Activated CD4-positive, alpha-beta T cell treated with anti-CD3 and anti-CD28 coated beads, Interleukin-2, amount 10 ng/mL, durations not matched to agents 24 days and 14 days (primary cell): ENCODE measurements at regions of chr14 and their contacts with region 1.

Region 1: GRCh38 chr14:58297762-58298476 is 436 bp upstream of the ARID4A start:
- DNase-seq: peak; percentile 99
- H3K4me3 Mint-ChIP-seq: no peak overlapping the region
- H3K27ac Mint-ChIP-seq: no peak overlapping the region
- H3K4me1 Mint-ChIP-seq: peaks cover 20% of the 10 kb centered on the region
- H3K27me3 Mint-ChIP-seq: no peaks in the 10 kb centered on the region

Region 2: DNA sequence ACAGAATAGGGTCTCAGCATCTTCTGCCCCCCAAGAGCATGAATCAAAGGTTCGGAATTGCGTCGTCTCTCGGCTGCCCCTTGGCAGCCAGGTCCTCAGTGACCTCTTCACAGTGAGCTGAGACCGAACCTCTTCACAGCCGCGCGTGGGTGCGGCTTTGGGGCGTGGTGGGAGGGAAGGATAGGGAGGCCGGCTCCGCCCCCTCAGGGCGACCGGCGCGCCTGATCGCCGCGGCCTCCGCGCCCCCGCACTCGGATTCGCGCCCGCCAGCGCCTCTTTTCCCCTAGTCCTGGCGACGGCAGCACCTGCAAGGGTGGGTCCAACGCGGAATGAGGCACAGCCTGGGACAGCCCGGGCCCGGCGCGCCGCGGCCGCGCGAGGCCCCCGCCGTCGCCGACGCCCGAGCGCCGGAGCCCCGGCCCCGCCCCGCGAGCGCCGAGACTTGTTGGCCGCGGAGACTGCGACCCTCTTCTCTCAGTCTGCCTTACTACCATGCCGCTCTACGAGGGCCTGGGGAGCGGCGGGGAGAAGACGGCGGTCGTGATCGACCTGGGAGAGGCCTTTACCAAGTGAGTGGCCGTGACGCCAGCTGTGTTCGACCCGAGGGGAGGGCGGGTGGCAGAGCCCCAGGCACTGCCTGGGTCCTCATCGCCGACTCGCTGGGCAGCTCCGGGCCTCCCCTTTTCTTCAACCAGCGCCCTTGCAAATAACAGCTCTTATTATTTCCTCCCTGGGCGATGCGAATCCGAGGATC is 98.0 kb before region 1 on chr14 and contains the start of gene ACTR10:
- intact Hi-C with region 1: loop called (anchors 1 kb)
- DNase-seq: peak; percentile 96
- H3K4me3 Mint-ChIP-seq: peak within 1 kb of the TSS; percentile 95
- H3K27ac Mint-ChIP-seq: peak within 1 kb of the TSS; percentile 94
- H3K4me1 Mint-ChIP-seq: peaks cover 17% of the 10 kb centered on the region
- H3K27me3 Mint-ChIP-seq: peaks cover 4% of the 10 kb centered on the region
- total RNA-seq, gene ACTR10: 38.7 and 40.5 TPM in 2 replicates

Region 3: GRCh38 chr14:58280954-58281787 is 16.7 kb before region 1 on chr14:
- intact Hi-C with region 1: loop called (anchors 1 kb)
- DNase-seq: peak; percentile 75
- H3K4me3 Mint-ChIP-seq: peak overlapping the region; percentile 69
- H3K27ac Mint-ChIP-seq: peak overlapping the region; percentile 96
- H3K4me1 Mint-ChIP-seq: peaks cover 51% of the 10 kb centered on the region
- H3K27me3 Mint-ChIP-seq: no peaks in the 10 kb centered on the region

Region 4: DNA sequence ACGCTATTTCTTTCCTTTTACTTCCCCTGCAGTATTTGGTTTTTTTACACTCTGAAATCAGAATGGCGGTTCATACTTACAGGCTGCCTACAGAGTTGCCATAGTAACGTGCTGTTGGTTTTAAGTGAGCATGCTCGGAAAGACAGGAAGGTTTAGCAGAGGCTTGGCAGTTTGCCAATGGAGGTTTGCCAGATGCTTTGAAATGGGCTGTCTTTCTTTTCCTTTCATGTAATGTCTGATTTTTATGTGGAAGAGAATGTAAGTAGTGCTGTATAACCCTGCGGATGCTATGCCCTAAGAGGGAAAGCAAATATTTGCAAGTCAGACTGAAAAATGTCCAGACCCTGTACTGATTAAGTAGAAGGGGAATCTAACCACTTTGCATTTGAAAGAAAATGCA is 33.2 kb after region 1 on chr14:
- intact Hi-C with region 1: loop called (anchors 1 kb)
- DNase-seq: peak; percentile 96
- H3K4me3 Mint-ChIP-seq: peak overlapping the region; percentile 66
- H3K27ac Mint-ChIP-seq: peak overlapping the region; percentile 87
- H3K4me1 Mint-ChIP-seq: peaks cover 12% of the 10 kb centered on the region
- H3K27me3 Mint-ChIP-seq: no peaks in the 10 kb centered on the region

Region 5: GRCh38 chr14:58427281-58428117 is 129.6 kb after region 1 on chr14 and contains the starts of genes KIAA0586 and TIMM9:
- intact Hi-C with region 1: loop called (anchors 1 kb)
- DNase-seq: peak; percentile 98
- H3K4me3 Mint-ChIP-seq: peak within 1 kb of the TSS; percentile 79
- H3K27ac Mint-ChIP-seq: peak within 1 kb of the TSS; percentile 94
- H3K4me1 Mint-ChIP-seq: peaks cover 31% of the 10 kb centered on the region
- H3K27me3 Mint-ChIP-seq: peaks cover 2% of the 10 kb centered on the region
- total RNA-seq, gene KIAA0586: 19.8 and 20.9 TPM in 2 replicates
- total RNA-seq, gene TIMM9: 67.7 and 71.8 TPM in 2 replicates

Region 6: GRCh38 chr14:59189786-59190771 is 892.2 kb after region 1 on chr14:
- intact Hi-C with region 1: loop called (anchors 2 kb)
- DNase-seq: peak; percentile 94
- H3K4me3 Mint-ChIP-seq: peak overlapping the region; percentile 98
- H3K27ac Mint-ChIP-seq: peak overlapping the region; percentile 73
- H3K4me1 Mint-ChIP-seq: peaks cover 16% of the 10 kb centered on the region
- H3K27me3 Mint-ChIP-seq: peaks cover 19% of the 10 kb centered on the region